Activated CD4-positive, alpha-beta T cell treated with anti-CD3 and anti-CD28 coated beads for 36 hours (primary cell): ENCODE measurements at regions of chrX and their contacts with region 1.

Region 1: DNA sequence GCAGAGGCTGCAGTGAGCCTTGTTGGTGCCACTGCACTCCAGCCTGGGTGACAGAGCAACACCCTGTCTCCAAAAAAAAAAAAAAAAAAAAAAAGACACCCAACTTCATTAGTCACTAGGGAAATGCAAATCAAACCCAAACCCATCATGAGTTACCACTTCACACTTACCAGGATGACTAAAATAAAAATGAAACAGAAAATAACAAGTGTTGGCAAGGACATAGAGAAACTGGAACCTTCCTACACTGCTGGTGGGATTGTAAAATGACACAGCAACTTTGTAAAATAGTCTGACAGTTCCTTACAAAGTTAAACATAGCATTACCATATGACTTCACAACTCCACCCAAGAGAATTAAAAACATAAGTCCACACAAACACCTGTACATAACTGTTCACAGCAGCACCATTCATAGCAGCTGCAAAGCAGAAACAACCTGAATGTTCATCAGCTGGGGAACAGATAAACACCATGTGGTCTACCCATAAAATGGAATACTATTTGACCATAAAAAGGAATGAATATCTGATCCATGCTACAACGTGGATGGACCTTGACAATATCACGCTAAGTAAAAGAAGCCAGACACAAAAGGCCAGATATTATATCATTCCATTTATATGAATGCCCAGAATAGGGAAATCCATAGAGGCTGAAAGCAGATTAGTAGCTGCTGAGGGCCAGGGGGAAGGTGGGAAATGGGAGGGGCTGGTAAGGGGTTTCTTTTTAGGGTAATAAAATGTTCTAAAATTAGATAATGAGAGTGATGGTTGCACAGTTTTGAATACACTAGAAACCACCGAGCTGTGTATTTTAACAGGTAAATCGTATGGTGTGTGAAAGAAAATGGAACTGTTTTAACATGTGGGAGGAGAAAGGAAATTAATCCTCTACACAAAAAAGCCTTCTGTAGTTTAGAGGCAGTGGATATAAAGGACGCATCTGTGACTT is 18.3 kb downstream of the CD99L2 start:
- DNase-seq: no peak
- ATAC-seq: peak; percentile 94
- H3K4me3 Mint-ChIP-seq: peak overlapping the region; percentile 4
- H3K27ac Mint-ChIP-seq: peak overlapping the region; percentile 73
- H3K4me1 Mint-ChIP-seq: peaks cover 33% of the 10 kb centered on the region
- H3K27me3 Mint-ChIP-seq: no peaks in the 10 kb centered on the region

Region 2: DNA sequence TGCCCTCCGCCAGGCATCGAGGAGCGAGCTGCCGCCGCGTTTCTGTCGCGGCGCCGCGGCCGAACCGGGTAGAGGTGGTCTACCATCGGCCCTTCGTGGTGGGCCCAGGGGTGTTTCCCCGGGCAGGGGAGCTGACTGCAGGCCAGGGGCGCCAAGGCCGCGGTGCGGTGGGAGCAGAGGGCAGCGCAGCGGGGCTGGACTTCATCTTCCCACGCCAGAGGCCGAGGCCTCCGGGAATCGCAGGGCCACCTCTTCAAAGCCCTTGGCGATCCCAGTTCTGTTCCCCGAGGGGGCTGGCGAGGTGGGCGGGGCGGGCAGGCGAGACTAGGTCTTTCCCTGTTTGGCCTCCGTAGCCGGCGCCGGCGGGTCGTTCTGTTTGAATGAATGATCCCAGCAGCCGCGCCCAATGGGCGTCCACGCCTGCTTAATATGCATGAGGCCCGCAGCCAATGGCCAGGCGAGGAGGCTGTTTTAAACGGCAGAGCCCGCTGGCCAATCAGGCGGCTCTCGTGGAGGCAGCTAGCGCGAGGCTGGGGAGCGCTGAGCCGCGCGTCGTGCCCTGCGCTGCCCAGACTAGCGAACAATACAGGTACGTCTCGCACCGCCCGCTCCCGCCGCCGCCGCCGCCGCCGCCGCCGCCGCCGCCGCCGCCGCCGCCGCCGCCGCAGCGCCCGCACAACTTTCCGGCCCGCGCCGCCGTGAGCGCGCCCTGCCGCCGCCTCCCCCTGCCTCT is 102.8 kb after region 1 on chrX and contains the start of gene HMGB3:
- CTCF ChIA-PET with region 1: no interaction called
- POLR2A ChIA-PET with region 1: no interaction called
- intact Hi-C with region 1: loop called in 1 of 2 experiments (anchors 5 kb)
- DNase-seq: peak; percentile 91
- ATAC-seq: peak; percentile 99
- H3K4me3 Mint-ChIP-seq: peak within 1 kb of the TSS; percentile 66
- H3K27ac Mint-ChIP-seq: no peak within 1 kb of the TSS
- H3K4me1 Mint-ChIP-seq: peaks cover 4% of the 10 kb centered on the region
- H3K27me3 Mint-ChIP-seq: peaks cover 16% of the 10 kb centered on the region
- total RNA-seq, gene HMGB3: 26.5 to 29.3 TPM

Region 3: GRCh38 chrX:151030845-151031244 is 150.7 kb after region 1 on chrX:
- CTCF ChIA-PET with region 1: no interaction called
- POLR2A ChIA-PET with region 1: no interaction called
- intact Hi-C with region 1: loop called in 1 of 2 experiments (anchors 5 kb)
- DNase-seq: peak; percentile 6
- ATAC-seq: peak; percentile 96
- H3K4me3 Mint-ChIP-seq: no peak overlapping the region
- H3K27ac Mint-ChIP-seq: peak overlapping the region; percentile 85
- H3K4me1 Mint-ChIP-seq: peaks cover 14% of the 10 kb centered on the region
- H3K27me3 Mint-ChIP-seq: peaks cover 6% of the 10 kb centered on the region